Esophagus squamous epithelium (tissue), 5 donors: ENCODE measurements at regions of chrX and their contacts with region 1.

Region 1: DNA sequence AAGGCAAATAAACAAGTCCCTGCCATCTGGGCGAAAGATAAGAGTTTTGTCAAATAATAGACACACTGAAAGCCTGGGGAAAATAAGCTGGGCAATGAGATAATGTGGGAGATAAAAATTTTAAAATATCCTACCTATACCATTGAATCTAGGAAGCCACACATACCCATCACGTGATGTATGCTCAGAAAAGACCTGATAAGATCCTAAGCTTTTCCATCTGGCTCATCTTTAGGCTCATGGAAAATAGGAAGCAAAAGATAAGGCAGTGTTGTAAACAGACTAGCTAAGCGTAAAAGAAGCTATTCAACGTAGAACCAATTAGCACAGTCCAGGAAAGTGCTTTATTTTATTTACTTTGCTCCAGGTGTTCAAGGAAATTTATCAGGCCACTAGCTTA is 103.6 kb downstream of the FAM47A start:
- DNase-seq: no peak
- H3K4me3 ChIP-seq: no peak overlapping the region
- H3K27ac ChIP-seq: no peak overlapping the region
- H3K4me1 ChIP-seq: no peaks in the 10 kb centered on the region
- H3K27me3 ChIP-seq: no peaks in the 10 kb centered on the region
- CTCF ChIP-seq: no peak
- POLR2A ChIP-seq: no peak

Region 2: DNA sequence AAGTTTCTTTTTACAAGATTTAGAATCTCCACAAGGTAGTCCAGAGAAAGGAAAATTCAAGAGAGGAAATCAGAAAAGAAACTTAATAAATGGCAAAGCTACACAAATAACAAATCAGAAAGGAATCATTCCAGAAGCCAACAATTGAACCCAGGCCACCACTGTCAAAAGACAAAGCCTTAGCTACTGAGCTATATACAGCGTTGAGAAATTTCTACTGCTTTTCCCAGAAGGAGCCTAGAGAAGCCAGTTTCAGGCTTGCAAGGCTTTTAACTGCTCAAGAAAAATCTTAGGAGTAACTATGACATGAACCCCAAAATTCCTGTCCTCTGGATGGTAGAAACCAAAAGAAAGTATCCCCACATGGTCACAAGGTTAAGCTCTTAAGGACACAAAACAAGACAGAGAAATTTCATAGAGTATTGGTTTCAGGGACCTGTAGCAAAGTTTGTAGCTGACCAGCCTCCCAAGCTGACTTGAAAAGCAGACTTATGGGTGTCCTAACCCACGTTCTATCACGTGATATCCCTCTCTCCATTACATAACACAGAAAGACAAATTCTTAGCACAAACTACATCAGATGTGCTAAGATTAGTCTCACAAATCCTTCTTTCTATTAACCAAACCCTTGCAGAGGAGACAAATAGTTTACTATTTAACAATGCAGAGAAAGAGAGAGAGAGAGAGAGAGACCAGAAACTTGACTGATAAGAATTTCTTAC is 946.0 kb before region 1 on chrX:
- intact Hi-C with region 1: no loop called
- DNase-seq: no peak
- H3K4me3 ChIP-seq: no peak overlapping the region
- H3K27ac ChIP-seq: no peak overlapping the region
- H3K4me1 ChIP-seq: no peaks in the 10 kb centered on the region
- H3K27me3 ChIP-seq: no peaks in the 10 kb centered on the region
- CTCF ChIP-seq: no peak
- POLR2A ChIP-seq: no peak

Region 3: DNA sequence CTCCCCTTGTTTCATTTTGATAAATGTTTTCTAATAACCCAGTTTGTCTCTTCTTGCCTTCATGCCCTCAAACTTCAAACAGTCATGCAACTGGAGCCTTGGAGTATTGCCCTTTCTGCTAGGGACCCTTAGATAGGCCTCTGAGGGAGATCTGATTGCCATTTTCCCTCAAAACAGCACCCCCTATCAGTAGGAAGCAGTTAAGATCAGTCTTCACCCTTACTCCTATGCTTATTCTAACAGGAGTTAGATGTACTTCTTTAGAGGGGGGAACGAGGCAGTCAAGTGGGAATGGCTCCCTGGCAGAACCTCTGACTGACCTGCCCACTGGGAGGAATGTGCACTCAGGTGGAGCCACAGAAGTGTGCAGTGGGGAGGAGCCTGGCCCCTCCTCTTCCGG is 29.5 kb after region 1 on chrX:
- intact Hi-C with region 1: loop called (anchors 5 kb)
- DNase-seq: no peak
- H3K4me3 ChIP-seq: no peak overlapping the region
- H3K27ac ChIP-seq: no peak overlapping the region
- H3K4me1 ChIP-seq: no peaks in the 10 kb centered on the region
- H3K27me3 ChIP-seq: no peaks in the 10 kb centered on the region
- CTCF ChIP-seq: no peak
- POLR2A ChIP-seq: no peak

Region 4: DNA sequence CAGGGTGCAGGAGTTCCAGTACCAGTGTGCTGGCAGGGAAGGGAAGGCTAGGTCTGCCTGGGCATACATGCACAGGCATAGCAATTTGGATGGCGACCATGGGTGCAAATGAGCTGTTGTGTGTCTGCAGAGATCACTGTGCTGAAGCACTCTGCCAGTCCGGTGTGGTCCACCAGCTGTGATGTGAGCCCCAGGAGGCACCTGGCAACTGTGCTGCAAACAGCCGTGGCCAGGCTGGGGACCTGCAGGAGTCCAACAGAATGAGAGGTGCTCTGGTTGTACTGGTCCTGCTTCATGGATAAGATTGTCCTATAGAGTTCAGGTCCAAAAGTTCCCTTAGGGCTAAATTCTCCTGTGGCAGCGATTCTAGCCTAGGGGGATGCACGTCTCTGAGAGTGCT is 97.5 kb after region 1 on chrX:
- intact Hi-C with region 1: no loop called
- DNase-seq: no peak
- H3K4me3 ChIP-seq: no peak overlapping the region
- H3K27ac ChIP-seq: no peak overlapping the region
- H3K4me1 ChIP-seq: no peaks in the 10 kb centered on the region
- H3K27me3 ChIP-seq: no peaks in the 10 kb centered on the region
- CTCF ChIP-seq: no peak
- POLR2A ChIP-seq: no peak